K562 (cell line): ENCODE measurements at regions of chr4 and their contacts with region 1.

Region 1: GRCh38 chr4:8607603-8608481 is 15.3 kb downstream of the CPZ start:
- DNase-seq: peak; percentile 42 to 82 (median 80)
- ATAC-seq: peak; percentile 84
- H3K4me3 ChIP-seq: no peak overlapping the region
- H3K27ac ChIP-seq: no peak overlapping the region
- H3K4me1 ChIP-seq: peaks cover 0 to 18% of the 10 kb centered on the region in 2 experiments; a peak in 2 of 5 replicates
- H3K27me3 ChIP-seq: 0 out of 5 replicates have a peak, but pooled peaks cover 0 to 5% of the 10 kb centered on the region in 2 experiments
- CTCF ChIP-seq: peak; percentile 76 to 91 (median 90)
- EP300 ChIP-seq: no peak
- POLR2A ChIP-seq: no peak
- RAD21 ChIP-seq: peak; percentile 38 to 74

Region 2: DNA sequence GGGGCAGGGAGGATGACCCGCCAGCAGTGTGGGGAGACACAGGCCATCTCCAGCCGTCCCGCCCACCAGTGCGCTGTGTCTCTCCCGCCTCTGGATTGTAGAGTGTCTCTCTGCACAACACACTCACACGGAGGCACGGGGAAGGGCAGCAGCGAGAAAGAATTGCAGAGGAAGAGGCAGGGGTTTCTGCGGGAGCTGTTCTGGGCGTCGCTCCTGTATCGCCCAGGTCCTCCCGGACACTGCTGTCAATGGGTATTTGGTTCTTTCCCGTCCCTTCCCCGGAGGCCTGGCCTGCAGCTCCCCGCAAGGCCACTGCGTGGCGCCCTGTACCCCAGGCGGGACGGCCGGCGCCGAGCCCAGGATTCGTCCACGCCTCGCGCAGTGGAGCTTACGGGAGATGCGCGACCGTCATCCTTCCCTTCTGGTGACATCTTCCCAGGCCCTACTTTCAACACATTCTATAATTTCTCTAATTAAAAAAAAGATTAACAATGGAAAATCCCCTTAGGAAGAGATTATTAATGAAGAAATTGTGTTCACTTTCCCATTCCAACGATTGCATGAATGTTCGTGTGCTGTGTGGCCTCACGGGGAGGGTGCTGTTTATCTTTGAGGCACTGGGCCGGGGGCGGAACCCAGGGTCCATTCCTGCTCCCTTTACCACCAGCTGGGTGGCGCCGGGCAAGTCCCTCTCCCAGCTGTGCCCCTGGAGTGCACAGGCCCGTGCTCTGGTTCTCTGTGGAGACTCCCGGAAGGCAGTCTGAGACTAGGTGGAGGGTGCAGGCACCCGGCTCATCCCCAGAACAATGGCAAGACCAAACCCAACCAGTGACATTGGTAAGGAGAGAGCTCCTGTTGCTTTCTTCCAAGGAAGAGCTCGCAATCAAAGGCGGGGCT is 80.4 kb after region 1 on chr4:
- CTCF ChIA-PET with region 1: no interaction called
- POLR2A ChIA-PET with region 1: no interaction called
- in situ Hi-C with region 1: no loop called
- intact Hi-C with region 1: no loop called
- DNase-seq: peak; percentile 51 to 79 (median 74)
- ATAC-seq: peak; percentile 97
- H3K4me3 ChIP-seq: no peak overlapping the region
- H3K27ac ChIP-seq: no peak overlapping the region
- H3K4me1 ChIP-seq: peaks cover 0 to 4% of the 10 kb centered on the region in 2 experiments; a peak in 2 of 5 replicates
- H3K27me3 ChIP-seq: peaks cover 2 to 33% of the 10 kb centered on the region in 2 experiments; a peak in 3 of 5 replicates
- CTCF ChIP-seq: peak; percentile 78 to 80 (median 79)
- EP300 ChIP-seq: no peak
- POLR2A ChIP-seq: no peak
- RAD21 ChIP-seq: peak in 1 of 2 experiments; percentile 72; a peak in 3 of 4 replicates

Region 3: GRCh38 chr4:8917868-8918783 is 310.3 kb after region 1 on chr4:
- CTCF ChIA-PET with region 1: no interaction called
- POLR2A ChIA-PET with region 1: no interaction called
- in situ Hi-C with region 1: no loop called
- intact Hi-C with region 1: loop called (anchors 10 kb)
- DNase-seq: peak; percentile 48 to 80 (median 74)
- ATAC-seq: peak; percentile 87
- H3K4me3 ChIP-seq: no peak overlapping the region
- H3K27ac ChIP-seq: no peak overlapping the region
- H3K4me1 ChIP-seq: peaks cover 0 to 3% of the 10 kb centered on the region in 2 experiments; a peak in 1 of 5 replicates
- H3K27me3 ChIP-seq: peaks cover 0 to 13% of the 10 kb centered on the region in 2 experiments; a peak in 1 of 5 replicates
- CTCF ChIP-seq: peak; percentile 72 to 77 (median 75)
- EP300 ChIP-seq: no peak
- POLR2A ChIP-seq: no peak
- RAD21 ChIP-seq: peak in 1 of 2 experiments; percentile 77; a peak in 3 of 4 replicates